GM12878 (cell line): ENCODE measurements at regions of chr6 and their contacts with region 1.

Region 1: GRCh38 chr6:16190214-16190613 is 48.2 kb upstream of the GMPR start:
- DNase-seq: no peak
- ATAC-seq: no peak
- H3K4me3 ChIP-seq: no peak overlapping the region
- H3K27ac ChIP-seq: no peak overlapping the region
- H3K4me1 ChIP-seq: no peaks in the 10 kb centered on the region
- H3K27me3 ChIP-seq: no peaks in the 10 kb centered on the region; a peak in 3 of 4 replicates
- CTCF ChIP-seq: no peak
- EP300 ChIP-seq: no peak
- POLR2A ChIP-seq: no peak
- RAD21 ChIP-seq: no peak

Region 2: GRCh38 chr6:16200321-16200883 is 10.2 kb after region 1 on chr6:
- CTCF ChIA-PET with region 1: interaction called, 14 read pairs
- POLR2A ChIA-PET with region 1: interaction called, 6 read pairs
- RAD21 ChIA-PET with region 1: interaction called, 6 read pairs
- SMC1A ChIA-PET with region 1: interaction called, 46 read pairs
- in situ Hi-C with region 1: no loop called
- intact Hi-C with region 1: no loop called
- DNase-seq: no peak
- ATAC-seq: no peak
- H3K4me3 ChIP-seq: no peak overlapping the region
- H3K27ac ChIP-seq: no peak overlapping the region
- H3K4me1 ChIP-seq: peaks cover 4% of the 10 kb centered on the region
- H3K27me3 ChIP-seq: no peaks in the 10 kb centered on the region
- CTCF ChIP-seq: no peak
- EP300 ChIP-seq: no peak
- POLR2A ChIP-seq: no peak
- RAD21 ChIP-seq: no peak